ENCODE measurements at regions of chr12 and their contacts with region 1.

Region 1: GRCh38 chr12:5556039-5556614 is 124.2 kb downstream of the NTF3 start:
- DNase-seq: no peak
- H3K4me3 ChIP-seq: no peak overlapping the region
- H3K27ac ChIP-seq: no peak overlapping the region
- H3K4me1 ChIP-seq: no peaks in the 10 kb centered on the region
- H3K27me3 ChIP-seq: no peaks in the 10 kb centered on the region
- CTCF ChIP-seq: peak in 3 of 5 experiments; percentile 19 to 28 (median 28)
- EP300 ChIP-seq: no peak
- POLR2A ChIP-seq: no peak

Region 2: DNA sequence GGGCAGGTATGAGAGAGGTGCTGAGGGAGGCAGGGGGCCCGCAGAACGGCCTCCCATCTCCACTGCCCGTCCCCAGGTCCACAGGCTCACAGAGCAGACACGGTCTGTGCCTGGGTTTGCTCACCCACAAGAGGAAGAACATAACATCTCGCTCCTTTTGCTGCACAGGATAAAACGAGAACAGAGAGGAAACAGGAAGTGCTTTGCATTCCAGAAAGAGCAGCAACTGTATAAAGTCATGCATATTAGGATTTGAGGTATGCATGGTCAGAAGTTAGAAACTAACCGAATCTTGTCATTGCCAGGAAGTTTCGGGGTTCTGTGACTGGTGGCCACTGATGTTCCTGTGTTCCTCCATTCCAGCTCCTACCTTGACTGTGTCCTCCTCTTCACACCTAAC is 99.2 kb before region 1 on chr12:
- in situ Hi-C with region 1: loop called in 1 of 4 experiments (anchors 25 kb)
- intact Hi-C with region 1: no loop called
- DNase-seq: no peak
- H3K4me3 ChIP-seq: no peak overlapping the region
- H3K27ac ChIP-seq: no peak overlapping the region
- H3K4me1 ChIP-seq: peaks cover 0 to 18% (median 0%) of the 10 kb centered on the region in 4 donors
- H3K27me3 ChIP-seq: no peaks in the 10 kb centered on the region
- CTCF ChIP-seq: no peak
- EP300 ChIP-seq: no peak
- POLR2A ChIP-seq: no peak

Region 3: DNA sequence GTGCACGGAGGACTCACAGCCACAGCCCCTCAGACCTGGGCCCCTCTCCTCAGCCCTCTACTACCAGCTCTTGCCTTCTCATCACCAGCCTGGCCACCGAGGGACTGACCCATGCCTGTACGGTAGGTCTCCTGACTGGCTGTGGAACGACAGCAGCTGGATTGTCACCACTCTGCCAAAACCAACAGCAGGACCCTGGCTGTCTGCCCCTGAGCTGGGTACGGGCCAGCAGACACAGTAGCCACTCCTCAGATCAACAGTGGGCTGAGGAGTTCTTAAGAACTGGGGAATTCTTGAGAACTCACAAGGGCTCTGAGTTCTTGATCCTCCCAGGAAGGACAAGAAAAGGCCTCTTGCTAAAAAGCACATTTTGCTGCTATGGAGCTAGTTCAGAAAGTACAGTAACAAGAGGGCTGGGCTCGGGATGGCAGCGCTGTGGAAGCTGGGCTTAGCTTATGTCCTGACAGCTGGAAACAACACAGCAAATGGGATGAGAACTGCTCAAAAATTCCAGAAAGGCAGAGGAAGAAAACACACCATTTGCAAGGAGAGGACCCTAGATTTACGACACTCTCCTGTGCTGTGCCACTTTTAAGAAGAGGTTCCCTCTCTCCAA is 212.6 kb after region 1 on chr12:
- in situ Hi-C with region 1: no loop called
- intact Hi-C with region 1: no loop called
- DNase-seq: no peak
- H3K4me3 ChIP-seq: no peak overlapping the region
- H3K27ac ChIP-seq: no peak overlapping the region
- H3K4me1 ChIP-seq: peaks cover 0 to 4% (median 0%) of the 10 kb centered on the region in 4 donors
- H3K27me3 ChIP-seq: no peaks in the 10 kb centered on the region
- CTCF ChIP-seq: no peak
- EP300 ChIP-seq: no peak
- POLR2A ChIP-seq: no peak

Measured in transverse colon (tissue), 4 donors.